SK-N-SH (cell line): ENCODE measurements at regions of chr19 and their contacts with region 1.

Region 1: DNA sequence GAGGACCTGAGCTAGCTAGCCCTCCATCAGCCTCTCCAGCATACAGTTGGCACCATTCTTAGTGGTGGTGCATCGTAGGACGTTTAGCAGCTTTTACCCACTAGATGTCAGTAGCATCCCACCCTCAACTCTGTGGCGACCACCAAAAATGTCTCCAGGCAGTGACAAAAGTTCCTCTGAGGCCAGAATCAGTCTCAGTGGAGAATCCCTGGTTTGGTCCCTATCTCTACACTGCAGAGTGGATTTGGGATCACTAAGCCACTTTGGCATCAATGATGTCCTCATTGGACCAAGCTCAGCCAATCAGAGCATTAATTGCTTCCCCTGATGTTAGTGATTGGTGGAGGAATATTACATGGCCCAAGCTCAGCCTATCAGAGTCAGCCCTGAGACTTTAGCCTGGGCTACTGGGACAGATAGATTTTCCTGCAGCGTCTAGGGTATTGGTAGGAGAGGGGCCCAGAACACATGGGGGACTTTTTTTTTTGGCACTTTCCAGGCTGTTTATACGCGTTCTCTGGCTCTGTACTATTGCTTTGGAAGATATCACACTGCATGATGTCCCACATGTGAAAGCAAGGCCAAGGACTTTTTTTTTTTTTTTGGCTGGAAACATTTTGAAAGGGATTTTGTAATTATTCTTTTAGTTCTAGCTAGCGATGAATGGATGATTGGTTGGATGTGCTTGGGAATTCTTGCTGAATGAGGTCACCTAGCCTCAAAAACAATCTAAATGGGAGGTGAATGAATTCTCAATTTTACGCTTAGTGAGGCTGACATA is 7.0 kb downstream of the TMEM221 start:
- DNase-seq: peak; percentile 68
- H3K4me3 ChIP-seq: no peak overlapping the region
- H3K27ac ChIP-seq: no peak overlapping the region
- H3K4me1 ChIP-seq: no peaks in the 10 kb centered on the region
- H3K27me3 ChIP-seq: no peaks in the 10 kb centered on the region
- CTCF ChIP-seq: peak; percentile 49
- EP300 ChIP-seq: no peak
- RAD21 ChIP-seq: peak; percentile 67

Region 2: DNA sequence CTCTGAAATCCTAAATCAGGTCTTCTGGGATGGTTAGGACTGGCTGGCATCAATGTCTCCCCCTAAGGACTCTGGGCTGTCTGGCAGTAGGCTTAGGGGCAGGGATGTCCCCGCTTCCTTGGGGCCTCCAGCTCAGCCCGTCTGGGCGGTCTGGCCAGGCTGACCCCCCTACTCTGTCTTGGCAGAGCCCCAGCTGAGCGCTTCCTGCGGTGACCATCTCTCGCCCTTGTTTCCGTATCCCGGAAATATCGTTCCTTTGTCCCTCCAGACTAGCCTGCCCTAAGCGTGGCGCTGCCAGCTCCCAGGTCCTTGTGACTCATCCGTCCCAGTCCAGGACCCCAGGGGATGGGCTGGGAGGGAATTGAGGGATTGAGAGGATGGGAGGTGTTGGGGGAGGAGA is 92.7 kb before region 1 on chr19:
- CTCF ChIA-PET with region 1: no interaction called
- POLR2A ChIA-PET with region 1: no interaction called
- DNase-seq: peak; percentile 86
- H3K4me3 ChIP-seq: no peak overlapping the region
- H3K27ac ChIP-seq: peak overlapping the region; percentile 12 to 45; a peak in 3 of 4 replicates
- H3K4me1 ChIP-seq: peaks cover 5 to 6% of the 10 kb centered on the region in 2 experiments; a peak in 1 of 4 replicates
- H3K27me3 ChIP-seq: no peaks in the 10 kb centered on the region
- CTCF ChIP-seq: no peak
- EP300 ChIP-seq: no peak
- RAD21 ChIP-seq: no peak

Region 3: DNA sequence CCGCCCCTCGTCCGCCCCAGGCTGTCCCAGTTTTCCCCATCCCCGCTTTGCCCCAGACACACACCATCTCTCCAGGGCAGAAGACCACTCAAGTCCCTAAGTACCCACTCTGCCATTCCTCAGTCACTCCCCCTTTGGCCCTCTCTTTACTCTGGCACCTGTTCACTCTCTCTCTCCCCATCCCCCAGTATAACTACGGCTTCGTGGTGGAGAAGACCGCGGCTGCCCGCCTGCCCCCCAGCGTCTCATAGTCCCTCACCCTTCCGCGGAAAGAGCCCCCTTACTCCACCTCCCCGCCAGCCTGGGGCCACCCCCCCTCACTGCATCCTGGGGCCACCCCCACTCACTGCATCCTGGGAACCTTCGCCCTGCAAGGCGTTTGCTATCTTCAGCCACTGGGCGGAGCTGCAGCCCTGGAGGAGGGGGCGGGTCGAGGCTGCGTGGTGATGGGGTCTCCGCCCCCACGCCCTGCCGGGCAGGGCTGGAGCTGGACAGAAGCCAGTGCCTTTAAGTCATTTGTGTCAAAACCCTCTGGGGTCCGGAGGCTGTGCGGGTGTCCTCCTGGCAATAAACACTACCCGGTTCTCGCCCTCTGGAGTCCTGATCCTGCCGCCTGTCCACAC is 16.6 kb before region 1 on chr19:
- CTCF ChIA-PET with region 1: interaction called, 11 read pairs
- POLR2A ChIA-PET with region 1: interaction called, 4 read pairs
- DNase-seq: peak; percentile 91
- H3K4me3 ChIP-seq: peak overlapping the region in 1 of 2 experiments; percentile 26; a peak in 1 of 4 replicates
- H3K27ac ChIP-seq: no peak overlapping the region
- H3K4me1 ChIP-seq: peaks cover 0 to 4% of the 10 kb centered on the region in 2 experiments; a peak in 1 of 4 replicates
- H3K27me3 ChIP-seq: no peaks in the 10 kb centered on the region
- CTCF ChIP-seq: peak; percentile 45
- EP300 ChIP-seq: no peak
- RAD21 ChIP-seq: peak; percentile 51